ENCODE measurements at regions of chr16 and their contacts with region 1.

Region 1: DNA sequence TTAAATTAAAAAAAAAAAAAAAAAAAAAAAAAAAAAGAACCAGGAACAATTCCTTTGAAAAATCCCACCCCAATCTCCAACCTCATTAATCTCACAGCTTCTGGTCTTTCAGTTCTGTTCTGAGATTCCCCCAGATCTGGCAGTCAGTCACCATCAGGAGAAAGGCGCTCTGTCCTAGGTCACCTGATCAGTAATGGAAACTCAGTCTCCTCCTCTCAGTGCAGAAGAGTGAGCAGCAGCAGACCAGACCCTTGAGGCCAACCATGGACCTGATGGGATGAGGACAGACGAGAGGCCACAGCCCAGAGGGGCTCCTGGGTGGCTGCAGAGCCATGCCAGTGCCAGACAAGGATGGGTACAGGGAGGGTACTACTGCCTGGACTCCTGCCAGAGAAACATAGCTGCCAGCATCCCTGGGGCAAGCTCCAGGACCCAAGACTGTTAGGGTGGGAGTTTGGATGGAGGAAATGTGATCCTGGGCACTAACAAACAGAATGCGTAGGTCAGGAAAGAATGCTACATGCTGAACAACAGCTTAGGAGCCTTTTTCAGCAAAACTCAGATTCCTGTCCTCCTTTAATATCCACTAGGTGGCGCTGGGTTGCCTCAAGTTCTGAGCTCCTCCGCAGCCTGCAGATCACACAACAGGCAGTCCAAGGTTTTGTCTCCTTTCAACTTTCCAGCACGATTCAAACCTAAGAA is 28.7 kb downstream of the MPG start:
- DNase-seq: peak; percentile 75
- ATAC-seq: peak; percentile 89
- H3K4me3 Mint-ChIP-seq: no peak overlapping the region
- H3K27ac Mint-ChIP-seq: no peak overlapping the region
- H3K4me1 Mint-ChIP-seq: no peaks in the 10 kb centered on the region
- H3K27me3 Mint-ChIP-seq: no peaks in the 10 kb centered on the region

Region 2: DNA sequence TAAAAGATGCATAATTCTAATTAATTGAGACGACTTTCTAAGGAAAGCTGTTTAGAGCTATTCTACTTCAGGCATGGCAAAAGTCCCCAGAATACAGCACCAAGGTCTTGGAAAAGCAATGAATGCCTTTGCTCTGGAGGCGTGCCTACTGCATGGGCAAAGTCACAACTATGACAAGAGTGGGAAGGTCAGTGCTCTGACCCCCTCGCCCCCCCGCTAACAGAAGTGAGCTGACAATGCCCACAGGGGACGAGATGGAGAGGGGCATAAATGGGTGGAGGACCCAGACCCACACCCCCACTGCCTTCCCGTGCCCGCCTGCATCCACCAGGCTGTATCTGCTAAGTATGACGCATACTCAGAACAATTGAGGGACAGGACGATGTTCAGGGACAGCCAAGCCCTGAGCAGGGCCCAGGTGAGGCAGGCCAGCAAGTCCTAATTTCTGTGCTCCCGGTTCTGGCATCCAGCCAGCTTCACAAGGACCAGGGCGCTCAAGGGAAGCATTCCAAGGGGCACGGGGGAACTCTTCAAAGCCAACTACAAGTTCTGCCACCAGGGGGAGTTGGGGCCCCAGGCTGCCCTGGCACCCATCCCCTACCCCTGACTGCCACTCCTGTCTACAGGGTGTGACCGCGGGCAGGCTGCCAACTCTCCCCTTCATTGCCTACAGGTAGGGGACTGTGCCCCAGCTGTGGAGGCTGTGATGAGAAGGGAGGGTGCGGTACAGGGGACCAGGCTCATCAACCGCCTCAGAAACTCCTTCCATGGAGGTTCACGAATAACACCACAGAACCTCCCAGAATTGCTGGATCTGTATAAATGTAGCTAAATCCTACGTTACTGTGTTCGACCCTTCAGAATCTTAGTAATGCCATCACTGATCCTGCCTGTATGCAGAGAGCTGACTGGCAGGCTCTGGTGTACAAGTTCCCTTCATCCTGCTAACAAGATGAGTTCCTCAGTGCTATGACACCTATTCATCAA is 10.9 kb after region 1 on chr16:
- CTCF ChIA-PET with region 1: interaction called, 30 read pairs
- POLR2A ChIA-PET with region 1: no interaction called
- DNase-seq: peak; percentile 74
- ATAC-seq: peak; percentile 90
- H3K4me3 Mint-ChIP-seq: no peak overlapping the region
- H3K27ac Mint-ChIP-seq: no peak overlapping the region
- H3K4me1 Mint-ChIP-seq: no peaks in the 10 kb centered on the region
- H3K27me3 Mint-ChIP-seq: no peaks in the 10 kb centered on the region

Region 3: GRCh38 chr16:180938-181667 is 74.3 kb after region 1 on chr16:
- CTCF ChIA-PET with region 1: interaction called, 15 read pairs
- POLR2A ChIA-PET with region 1: interaction called, 3 read pairs
- DNase-seq: peak; percentile 88
- ATAC-seq: peak; percentile 78
- H3K4me3 Mint-ChIP-seq: no peak overlapping the region
- H3K27ac Mint-ChIP-seq: no peak overlapping the region
- H3K4me1 Mint-ChIP-seq: peaks cover 12% of the 10 kb centered on the region
- H3K27me3 Mint-ChIP-seq: peaks cover 24% of the 10 kb centered on the region

Region 4: GRCh38 chr16:188671-189070 is 81.9 kb after region 1 on chr16:
- CTCF ChIA-PET with region 1: interaction called, 13 read pairs
- POLR2A ChIA-PET with region 1: interaction called, 3 read pairs
- DNase-seq: peak; percentile 52
- ATAC-seq: peak; percentile 76
- H3K4me3 Mint-ChIP-seq: no peak overlapping the region
- H3K27ac Mint-ChIP-seq: peak overlapping the region; percentile 39
- H3K4me1 Mint-ChIP-seq: peaks cover 6% of the 10 kb centered on the region
- H3K27me3 Mint-ChIP-seq: no peaks in the 10 kb centered on the region

Region 5: GRCh38 chr16:228818-229730 is 122.3 kb after region 1 on chr16 and contains the start of gene LUC7L:
- CTCF ChIA-PET with region 1: interaction called, 17 read pairs
- POLR2A ChIA-PET with region 1: no interaction called
- DNase-seq: peak; percentile 91
- ATAC-seq: peak; percentile 89
- H3K4me3 Mint-ChIP-seq: peak within 1 kb of the TSS; percentile 85
- H3K27ac Mint-ChIP-seq: peak within 1 kb of the TSS; percentile 91
- H3K4me1 Mint-ChIP-seq: peaks cover 29% of the 10 kb centered on the region
- H3K27me3 Mint-ChIP-seq: no peaks in the 10 kb centered on the region
- total RNA-seq, gene LUC7L: 56.1 to 58.4 TPM

Region 6: GRCh38 chr16:261031-261691 is 154.4 kb after region 1 on chr16:
- CTCF ChIA-PET with region 1: no interaction called
- POLR2A ChIA-PET with region 1: no interaction called
- DNase-seq: no peak
- ATAC-seq: no peak
- H3K4me3 Mint-ChIP-seq: no peak overlapping the region
- H3K27ac Mint-ChIP-seq: no peak overlapping the region
- H3K4me1 Mint-ChIP-seq: peaks cover under 1% of the 10 kb centered on the region
- H3K27me3 Mint-ChIP-seq: no peaks in the 10 kb centered on the region

Region 7: GRCh38 chr16:278863-279366 is 172.1 kb after region 1 on chr16:
- CTCF ChIA-PET with region 1: no interaction called
- POLR2A ChIA-PET with region 1: no interaction called
- DNase-seq: peak; percentile 66
- ATAC-seq: peak; percentile 70
- H3K4me3 Mint-ChIP-seq: no peak overlapping the region
- H3K27ac Mint-ChIP-seq: no peak overlapping the region
- H3K4me1 Mint-ChIP-seq: peaks cover 9% of the 10 kb centered on the region
- H3K27me3 Mint-ChIP-seq: peaks cover 26% of the 10 kb centered on the region

Region 8: GRCh38 chr16:361872-362701 is 255.3 kb after region 1 on chr16:
- CTCF ChIA-PET with region 1: interaction called, 37 read pairs
- POLR2A ChIA-PET with region 1: no interaction called
- DNase-seq: peak; percentile 82
- ATAC-seq: peak; percentile 88
- H3K4me3 Mint-ChIP-seq: no peak overlapping the region
- H3K27ac Mint-ChIP-seq: no peak overlapping the region
- H3K4me1 Mint-ChIP-seq: peaks cover 6% of the 10 kb centered on the region
- H3K27me3 Mint-ChIP-seq: no peaks in the 10 kb centered on the region